ENCODE measurements at regions of chr3 and their contacts with region 1.

Region 1: GRCh38 chr3:149812606-149813366 is at the start of gene RNF13:
- DNase-seq: peak; percentile 99
- total RNA-seq, gene RNF13: 46.6 TPM

Region 2: DNA sequence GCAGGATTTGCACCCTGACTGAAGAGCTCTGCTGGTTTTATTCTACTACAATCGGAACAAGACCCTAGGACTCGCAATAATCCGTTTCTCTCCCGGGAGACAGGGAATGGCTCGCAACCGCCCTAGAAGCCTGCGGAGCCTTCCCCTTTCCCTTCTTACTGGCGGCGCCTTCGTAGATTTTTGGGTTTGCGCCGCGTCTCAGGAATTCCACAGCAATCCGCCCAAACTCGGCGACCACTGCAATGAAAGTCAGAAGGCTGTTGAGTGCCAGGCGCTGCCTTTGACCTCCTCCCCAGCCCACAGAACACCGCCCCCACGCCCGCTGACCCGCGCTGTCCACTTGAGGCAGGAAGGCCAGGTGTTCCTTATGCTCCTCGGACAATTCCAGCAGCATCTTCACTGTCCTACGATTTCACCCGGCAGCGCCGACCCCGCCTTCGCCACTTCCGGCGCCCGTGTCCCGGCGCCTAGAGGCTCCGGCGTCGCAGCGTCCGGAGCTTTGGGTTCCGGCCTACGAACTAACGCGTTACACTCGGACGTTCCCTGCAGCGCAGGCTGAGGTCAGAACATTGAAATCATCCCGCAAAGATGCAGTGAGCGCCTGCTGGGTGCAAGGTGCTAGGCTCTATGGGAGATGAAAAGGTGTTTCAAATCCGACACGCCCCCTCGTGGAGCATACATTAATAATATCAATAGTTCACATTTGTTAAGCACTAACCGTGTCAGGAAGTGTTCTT is 60.6 kb before region 1 on chr3 and contains the start of gene COMMD2:
- intact Hi-C with region 1: loop called (anchors 2 kb)
- DNase-seq: peak; percentile 87
- total RNA-seq, gene COMMD2: 19.5 TPM